ENCODE measurements at regions of chr12 and their contacts with region 1.

Region 1: GRCh38 chr12:129372876-129373275 is 519.6 kb downstream of the GLT1D1 start:
- DNase-seq: no peak
- ATAC-seq: no peak

Region 2: GRCh38 chr12:129393357-129393937 is 20.6 kb after region 1 on chr12:
- intact Hi-C with region 1: loop called (anchors 1 kb)
- DNase-seq: no peak
- ATAC-seq: no peak